PC-3 (cell line): ENCODE measurements at regions of chr5 and their contacts with region 1.

Region 1: DNA sequence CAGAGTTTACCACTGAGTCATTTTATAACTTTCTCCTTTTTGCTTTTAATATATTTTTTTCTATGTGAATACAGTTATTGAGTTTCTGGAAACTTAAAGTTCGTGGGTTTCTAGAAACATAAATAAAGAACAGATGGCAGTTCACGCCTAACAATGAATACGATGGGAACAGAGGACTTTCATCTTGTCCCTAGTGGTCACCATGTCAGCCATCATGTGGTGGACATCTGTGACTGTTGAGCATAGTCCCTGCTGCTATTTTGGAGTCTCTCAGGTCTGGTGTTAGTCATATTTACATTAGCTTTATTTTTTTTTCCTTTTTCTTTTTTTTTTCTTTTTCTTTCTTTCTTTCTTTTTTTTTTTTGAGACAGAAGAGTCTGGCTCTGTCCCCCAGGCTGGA is 85.3 kb downstream of the XRCC4 start:
- DNase-seq: no peak
- ATAC-seq: no peak
- H3K4me3 ChIP-seq: no peak overlapping the region
- H3K27ac ChIP-seq: no peak overlapping the region
- H3K4me1 ChIP-seq: no peaks in the 10 kb centered on the region
- H3K27me3 ChIP-seq: no peaks in the 10 kb centered on the region
- CTCF ChIP-seq: no peak

Region 2: DNA sequence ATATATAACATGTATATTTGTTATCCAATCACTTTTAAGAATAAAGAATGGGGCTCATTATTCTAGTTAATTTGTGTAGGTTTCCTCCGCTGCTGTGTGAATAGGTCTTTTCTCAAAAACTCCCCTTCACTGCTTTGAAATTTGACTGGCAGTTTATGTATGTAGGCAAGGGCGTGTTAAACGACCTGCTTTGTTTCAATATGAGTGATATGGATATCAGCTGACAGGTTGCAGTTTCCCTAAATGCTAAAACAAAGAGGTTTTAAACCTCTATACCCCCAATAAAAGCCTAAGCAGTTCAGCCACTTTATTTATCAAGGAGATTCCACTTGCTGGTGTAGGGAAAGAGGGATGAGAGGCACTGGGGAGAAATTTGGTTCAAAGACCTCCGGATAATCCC is 245.0 kb before region 1 on chr5:
- CTCF ChIA-PET with region 1: no interaction called
- POLR2A ChIA-PET with region 1: interaction called, 10 read pairs
- intact Hi-C with region 1: no loop called
- DNase-seq: no peak
- ATAC-seq: no peak
- H3K4me3 ChIP-seq: no peak overlapping the region
- H3K27ac ChIP-seq: no peak overlapping the region
- H3K4me1 ChIP-seq: no peaks in the 10 kb centered on the region
- H3K27me3 ChIP-seq: no peaks in the 10 kb centered on the region
- CTCF ChIP-seq: no peak